ENCODE measurements at regions of chr22 and their contacts with region 1.

Region 1: GRCh38 chr22:32103658-32104315 is 55.3 kb downstream of the C22orf42 start:
- DNase-seq: no peak

Region 2: GRCh38 chr22:31891366-31892079 is 212.3 kb before region 1 on chr22:
- intact Hi-C with region 1: no loop called
- DNase-seq: no peak

Region 3: GRCh38 chr22:32042924-32043790 is 60.6 kb before region 1 on chr22 and contains the start of gene SLC5A1:
- intact Hi-C with region 1: no loop called
- DNase-seq: no peak

Region 4: GRCh38 chr22:32265882-32266767 is 162.3 kb after region 1 on chr22:
- intact Hi-C with region 1: loop called (anchors 5 kb)
- DNase-seq: peak; percentile 42 to 92 (median 66)

Region 5: GRCh38 chr22:32457031-32457430 is 353.2 kb after region 1 on chr22:
- intact Hi-C with region 1: loop called (anchors 10 kb)
- DNase-seq: no peak

Measured in posterior cingulate gyrus (tissue), 11 donors.